WTC11 (cell line): ENCODE measurements at regions of chr10 and their contacts with region 1.

Region 1: GRCh38 chr10:5466418-5467154 is 32.8 kb downstream of the CALML5 start:
- DNase-seq: peak; percentile 64
- ATAC-seq: peak; percentile 86
- H3K4me3 Mint-ChIP-seq: peak overlapping the region; percentile 45
- H3K27ac Mint-ChIP-seq: peak overlapping the region; percentile 99
- H3K4me1 Mint-ChIP-seq: peaks cover 67% of the 10 kb centered on the region
- H3K27me3 Mint-ChIP-seq: peaks cover 29% of the 10 kb centered on the region
- CTCF ChIP-seq: no peak

Region 2: GRCh38 chr10:5446390-5446926 is 20.1 kb before region 1 on chr10:
- CTCF ChIA-PET with region 1: interaction called, 14 read pairs
- POLR2A ChIA-PET with region 1: interaction called, 3 read pairs
- DNase-seq: peak; percentile 95
- ATAC-seq: peak; percentile 98
- H3K4me3 Mint-ChIP-seq: peak overlapping the region; percentile 82
- H3K27ac Mint-ChIP-seq: peak overlapping the region; percentile 93
- H3K4me1 Mint-ChIP-seq: peaks cover 34% of the 10 kb centered on the region
- H3K27me3 Mint-ChIP-seq: no peaks in the 10 kb centered on the region
- CTCF ChIP-seq: no peak

Region 3: GRCh38 chr10:5517546-5517945 is 51.0 kb after region 1 on chr10:
- CTCF ChIA-PET with region 1: no interaction called
- POLR2A ChIA-PET with region 1: no interaction called
- DNase-seq: no peak
- ATAC-seq: no peak
- H3K4me3 Mint-ChIP-seq: no peak overlapping the region
- H3K27ac Mint-ChIP-seq: no peak overlapping the region
- H3K4me1 Mint-ChIP-seq: peaks cover 7% of the 10 kb centered on the region; the same call in 1 of the 2 replicates
- H3K27me3 Mint-ChIP-seq: peaks cover 9% of the 10 kb centered on the region
- CTCF ChIP-seq: no peak

Region 4: GRCh38 chr10:5563991-5564536 is 97.5 kb after region 1 on chr10:
- CTCF ChIA-PET with region 1: no interaction called
- POLR2A ChIA-PET with region 1: no interaction called
- DNase-seq: no peak
- ATAC-seq: no peak
- H3K4me3 Mint-ChIP-seq: no peak overlapping the region
- H3K27ac Mint-ChIP-seq: no peak overlapping the region; the same call in 1 of the 2 replicates
- H3K4me1 Mint-ChIP-seq: peaks cover 20% of the 10 kb centered on the region
- H3K27me3 Mint-ChIP-seq: peaks cover 2% of the 10 kb centered on the region; the same call in 1 of the 2 replicates
- CTCF ChIP-seq: no peak